ENCODE measurements at regions of chr14 and their contacts with region 1.

Region 1: DNA sequence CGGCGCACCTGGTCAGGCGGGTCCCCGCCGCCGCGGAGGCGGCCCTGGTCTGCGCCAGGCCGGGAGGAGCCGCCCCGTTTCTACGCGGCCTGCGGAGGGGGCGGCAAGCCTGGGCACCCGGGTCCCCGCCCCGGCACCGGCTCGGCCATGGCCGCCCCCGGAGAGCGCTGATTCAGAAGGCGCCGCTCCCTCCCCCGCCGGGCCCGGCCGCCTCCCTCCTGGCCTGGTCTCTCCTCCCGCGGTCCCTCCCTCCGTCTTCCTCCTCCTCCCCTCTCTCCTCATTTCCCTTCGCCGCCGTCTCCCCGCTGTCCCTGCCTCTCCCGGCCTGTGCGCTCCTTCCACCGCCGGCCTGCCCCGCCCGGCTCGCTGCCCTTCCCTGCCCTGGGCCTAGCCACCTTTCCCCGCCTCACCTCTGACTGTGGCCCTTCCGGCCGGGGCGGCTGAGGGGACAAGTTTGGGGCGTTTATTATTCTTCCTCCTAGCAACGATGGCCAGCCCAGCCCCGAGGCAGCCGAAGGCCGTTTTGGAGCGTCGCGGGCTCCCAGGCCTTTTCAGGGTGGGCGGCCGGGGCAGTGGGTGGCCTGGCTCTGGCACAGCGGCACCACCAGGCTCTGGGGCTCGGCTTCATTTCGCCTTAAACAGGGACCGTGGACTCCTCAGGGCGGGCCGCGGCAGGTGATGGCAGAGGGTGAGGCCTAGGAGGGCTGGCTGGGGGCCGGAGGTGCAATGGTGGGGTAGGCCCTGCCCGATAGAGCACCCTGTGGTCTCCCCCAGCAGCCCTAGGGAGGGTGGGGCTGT is 775 bp downstream of the CEP170B start:
- DNase-seq: peak in 5 of 14 experiments; percentile 18 to 52 (median 45)
- ATAC-seq: peak; percentile 43
- H3K4me3 ChIP-seq: peak overlapping the region; percentile 34
- H3K4me3 Mint-ChIP-seq: peak overlapping the region; percentile 81
- H3K27ac ChIP-seq: no peak overlapping the region
- H3K27ac Mint-ChIP-seq: no peak overlapping the region
- H3K4me1 ChIP-seq: peaks cover 22% of the 10 kb centered on the region
- H3K4me1 Mint-ChIP-seq: peaks cover 6% of the 10 kb centered on the region
- H3K27me3 ChIP-seq: peaks cover 12 to 17% of the 10 kb centered on the region in 2 experiments
- H3K27me3 Mint-ChIP-seq: peaks cover 12% of the 10 kb centered on the region
- CTCF ChIP-seq: no peak

Region 2: DNA sequence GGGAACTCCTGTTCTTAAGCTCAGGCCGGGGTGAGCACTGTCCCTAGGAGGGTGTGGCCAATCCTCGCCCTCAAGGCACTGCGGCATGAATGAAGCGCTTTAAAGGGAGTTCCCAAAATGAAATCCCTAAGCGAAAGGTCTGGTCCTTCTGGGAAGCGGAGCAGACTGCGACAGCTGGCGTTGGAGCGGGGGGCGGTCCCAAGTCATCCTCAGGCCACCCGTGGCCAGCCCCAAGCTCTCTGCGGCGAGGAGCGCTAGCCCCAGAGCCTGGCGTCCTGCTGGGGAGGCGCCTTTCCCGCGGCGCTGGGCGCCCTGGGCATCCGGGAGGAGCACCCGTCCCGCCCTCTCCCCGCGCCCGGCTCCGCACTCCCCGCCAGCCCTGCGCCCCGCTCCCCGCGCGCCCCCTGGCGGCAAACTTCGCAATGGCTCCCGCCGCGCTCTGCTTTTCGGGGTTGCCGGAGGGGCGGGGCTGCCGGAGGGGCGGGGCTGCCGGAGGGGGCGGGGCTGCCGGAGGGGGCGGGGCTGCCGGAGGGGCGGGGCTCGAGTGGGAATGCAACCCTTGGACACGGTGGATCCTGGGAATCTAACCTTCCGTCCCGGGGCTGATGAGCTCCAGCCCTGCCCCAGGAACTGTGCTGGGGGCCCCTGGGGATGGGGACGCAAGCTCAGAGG is 39.5 kb before region 1 on chr14:
- CTCF ChIA-PET with region 1: no interaction called
- POLR2A ChIA-PET with region 1: no interaction called
- intact Hi-C with region 1: loop called in 1 of 2 experiments (anchors 2 kb)
- DNase-seq: peak; percentile 87 to 99 (median 94)
- ATAC-seq: peak; percentile 91
- H3K4me3 ChIP-seq: peak overlapping the region; percentile 74
- H3K4me3 Mint-ChIP-seq: peak overlapping the region; percentile 91
- H3K27ac ChIP-seq: no peak overlapping the region
- H3K27ac Mint-ChIP-seq: no peak overlapping the region
- H3K4me1 ChIP-seq: peaks cover 23% of the 10 kb centered on the region
- H3K4me1 Mint-ChIP-seq: peaks cover 29% of the 10 kb centered on the region
- H3K27me3 ChIP-seq: no peaks in the 10 kb centered on the region
- H3K27me3 Mint-ChIP-seq: peaks cover 10% of the 10 kb centered on the region
- CTCF ChIP-seq: peak; percentile 74

Measured in CD4-positive, alpha-beta T cell (primary cell).